ENCODE measurements at regions of chr2 and their contacts with region 1.

Region 1: GRCh38 chr2:65040400-65041261 is 15.6 kb upstream of the CEP68 start:
- DNase-seq: peak; percentile 92
- ATAC-seq: peak; percentile 97

Region 2: GRCh38 chr2:64792307-64792706 is 248.3 kb before region 1 on chr2:
- intact Hi-C with region 1: no loop called
- DNase-seq: no peak
- ATAC-seq: no peak

Region 3: GRCh38 chr2:64888591-64889309 is 151.9 kb before region 1 on chr2:
- intact Hi-C with region 1: no loop called
- DNase-seq: no peak
- ATAC-seq: peak; percentile 58

Region 4: GRCh38 chr2:64914735-64915509 is 125.7 kb before region 1 on chr2:
- intact Hi-C with region 1: loop called (anchors 5 kb)
- DNase-seq: no peak
- ATAC-seq: no peak